A549 (cell line): ENCODE measurements at regions of chr7 and their contacts with region 1.

Region 1: DNA sequence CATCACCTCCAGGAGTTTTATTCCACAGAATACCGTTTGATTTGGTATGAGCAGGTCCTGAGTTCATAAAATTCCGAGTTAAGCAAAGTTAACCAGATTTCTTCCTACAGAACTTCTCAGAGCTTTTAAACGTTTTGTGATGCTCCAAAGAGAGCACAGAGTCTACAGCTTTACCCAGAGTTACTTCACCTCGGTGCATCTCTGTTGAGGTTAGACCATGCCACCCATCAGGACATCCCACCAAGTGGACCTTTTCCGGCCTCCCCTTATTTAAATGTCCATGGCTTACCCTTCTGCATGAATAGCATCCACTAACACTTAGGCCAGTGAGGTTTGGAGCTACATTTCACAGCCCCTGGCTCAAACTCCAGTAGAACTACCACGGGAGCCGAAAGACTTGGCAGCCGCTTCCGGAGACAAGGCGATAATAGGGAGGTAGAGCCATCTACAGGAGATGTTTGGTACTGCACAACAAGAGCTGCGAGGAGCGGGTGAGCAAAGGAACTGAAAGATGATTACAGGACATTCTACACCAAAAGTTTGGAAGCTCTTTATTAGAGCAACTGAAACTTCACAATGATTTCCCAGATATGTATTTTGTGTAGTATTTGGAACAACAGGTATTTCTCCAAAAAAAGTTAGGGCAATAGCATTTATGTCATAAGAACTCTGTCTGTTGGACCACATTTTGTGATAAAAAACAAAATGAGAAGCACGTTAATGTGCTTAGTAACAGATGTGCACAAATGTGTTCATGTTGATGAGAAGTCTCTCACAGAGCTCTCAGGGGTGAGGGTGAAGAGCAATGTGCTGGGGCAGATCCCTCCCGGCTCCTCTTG is 174.7 kb downstream of the HERPUD2 start:
- DNase-seq: peak; percentile 71 to 85
- ATAC-seq: peak; percentile 75 to 95
- H3K4me3 ChIP-seq: no peak overlapping the region
- H3K27ac ChIP-seq: no peak overlapping the region
- H3K4me1 ChIP-seq: no peaks in the 10 kb centered on the region
- CTCF ChIP-seq: peak; percentile 78
- EP300 ChIP-seq: no peak
- POLR2A ChIP-seq: no peak
- RAD21 ChIP-seq: peak; percentile 84 to 90

Region 2: DNA sequence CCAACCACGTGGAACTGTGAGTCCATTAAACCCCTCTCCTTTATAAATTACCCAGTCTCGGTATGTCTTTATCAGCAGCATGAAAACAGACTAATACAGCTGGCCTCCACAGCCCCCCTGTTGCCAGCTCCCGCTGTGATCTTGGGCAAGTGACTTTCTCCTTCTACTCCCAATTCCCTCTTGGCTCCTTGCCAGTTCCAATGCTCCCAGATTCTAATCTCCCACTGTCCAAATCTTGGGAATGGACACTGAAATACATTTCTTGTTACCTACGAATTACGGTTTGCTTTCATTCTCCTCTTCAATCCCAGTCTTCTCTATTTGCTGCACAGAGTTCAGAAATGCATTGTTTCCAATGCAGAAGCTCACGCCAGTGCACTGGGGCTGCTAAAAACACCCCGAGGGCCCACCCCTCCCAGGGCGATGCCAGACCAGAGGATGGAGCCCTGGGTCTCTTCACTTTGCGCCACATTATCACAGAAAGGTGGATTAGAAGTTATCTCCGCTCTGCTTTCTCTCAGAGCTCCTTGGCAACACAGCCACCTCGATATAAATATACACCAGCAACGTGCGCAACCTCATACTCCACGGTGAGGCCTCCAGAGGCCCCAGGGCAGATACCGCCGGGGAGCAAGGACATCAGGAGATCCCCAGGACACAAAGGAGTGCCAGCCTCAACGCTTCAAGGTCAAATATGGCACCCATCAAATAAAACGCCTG is 145.5 kb before region 1 on chr7:
- CTCF ChIA-PET with region 1: interaction called, 11 read pairs
- POLR2A ChIA-PET with region 1: no interaction called
- DNase-seq: no peak
- ATAC-seq: no peak
- H3K4me3 ChIP-seq: no peak overlapping the region
- H3K27ac ChIP-seq: no peak overlapping the region
- H3K4me1 ChIP-seq: no peaks in the 10 kb centered on the region
- CTCF ChIP-seq: no peak
- EP300 ChIP-seq: no peak
- POLR2A ChIP-seq: no peak
- RAD21 ChIP-seq: no peak

Region 3: GRCh38 chr7:35424869-35425495 is 95.2 kb before region 1 on chr7:
- CTCF ChIA-PET with region 1: interaction called, 24 read pairs
- POLR2A ChIA-PET with region 1: no interaction called
- DNase-seq: peak; percentile 51 to 61
- ATAC-seq: peak; percentile 88 to 90; a peak in 5 of 6 replicates
- H3K4me3 ChIP-seq: no peak overlapping the region
- H3K27ac ChIP-seq: no peak overlapping the region
- H3K4me1 ChIP-seq: no peaks in the 10 kb centered on the region
- CTCF ChIP-seq: peak; percentile 79
- EP300 ChIP-seq: no peak
- POLR2A ChIP-seq: no peak
- RAD21 ChIP-seq: peak; percentile 65

Region 4: GRCh38 chr7:35430547-35431153 is 89.5 kb before region 1 on chr7:
- CTCF ChIA-PET with region 1: interaction called, 24 read pairs
- POLR2A ChIA-PET with region 1: no interaction called
- DNase-seq: peak in 1 of 2 experiments; percentile 41
- ATAC-seq: peak in 1 of 2 experiments; percentile 42; a peak in 1 of 6 replicates
- H3K4me3 ChIP-seq: no peak overlapping the region
- H3K27ac ChIP-seq: no peak overlapping the region
- H3K4me1 ChIP-seq: no peaks in the 10 kb centered on the region
- CTCF ChIP-seq: no peak
- EP300 ChIP-seq: no peak
- POLR2A ChIP-seq: no peak
- RAD21 ChIP-seq: peak in 1 of 2 experiments; percentile 42; a peak in 2 of 5 replicates

Region 5: GRCh38 chr7:35508623-35509400 is 11.4 kb before region 1 on chr7:
- CTCF ChIA-PET with region 1: interaction called, 22 read pairs
- POLR2A ChIA-PET with region 1: no interaction called
- DNase-seq: peak in 1 of 2 experiments; percentile 10
- ATAC-seq: peak; percentile 74 to 83; a peak in 5 of 6 replicates
- H3K4me3 ChIP-seq: no peak overlapping the region
- H3K27ac ChIP-seq: no peak overlapping the region
- H3K4me1 ChIP-seq: no peaks in the 10 kb centered on the region
- CTCF ChIP-seq: peak; percentile 6; the same call in 1 of the 3 replicates
- EP300 ChIP-seq: no peak
- POLR2A ChIP-seq: no peak
- RAD21 ChIP-seq: no peak

Region 6: DNA sequence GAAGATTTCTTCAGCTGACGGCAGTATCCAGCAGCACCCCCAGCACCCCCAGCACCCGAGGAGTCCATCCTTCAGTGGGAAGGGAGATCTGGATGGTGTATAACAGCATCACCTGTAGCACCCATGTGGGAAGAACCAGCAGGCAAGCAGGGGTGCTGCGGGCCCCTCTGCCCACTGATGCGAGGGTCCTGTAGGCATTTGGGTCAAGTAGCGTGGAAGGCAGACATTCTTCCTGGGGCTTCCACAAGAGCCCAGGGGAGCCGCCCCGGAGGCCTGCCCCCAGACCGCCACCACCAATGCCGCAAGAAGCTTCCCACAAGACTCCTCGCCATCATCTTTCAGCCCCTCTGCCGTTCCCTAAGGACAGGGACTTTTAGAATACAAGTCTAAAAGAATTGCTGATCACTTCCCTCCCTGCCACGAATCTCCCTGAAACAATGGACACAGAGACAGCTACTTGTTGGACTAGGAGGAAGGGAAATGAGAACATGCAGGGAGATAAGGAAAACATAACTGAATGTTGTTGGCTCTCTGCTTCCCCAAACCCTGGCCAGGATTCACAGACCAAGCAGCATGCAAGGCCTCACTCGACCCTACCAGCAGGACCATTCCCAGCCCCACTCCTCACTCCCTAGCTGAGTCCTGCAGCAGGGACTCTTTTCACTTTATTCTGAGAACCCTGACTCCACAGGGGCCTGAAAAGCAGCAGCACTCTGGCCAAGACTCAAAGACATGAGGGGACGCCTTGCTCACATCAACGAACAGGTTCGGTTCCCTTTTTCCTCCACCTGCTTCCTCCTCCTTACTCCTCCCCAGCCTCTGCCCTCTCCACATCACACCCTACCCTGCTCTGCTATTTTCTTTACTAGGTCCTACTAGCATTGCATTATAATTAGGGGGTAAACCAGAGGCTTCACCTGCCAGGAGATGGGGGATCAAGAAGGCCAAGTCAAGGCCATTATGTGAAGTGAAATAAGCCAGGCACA is 10.2 kb after region 1 on chr7:
- CTCF ChIA-PET with region 1: interaction called, 16 read pairs
- POLR2A ChIA-PET with region 1: no interaction called
- DNase-seq: no peak
- ATAC-seq: no peak
- H3K4me3 ChIP-seq: no peak overlapping the region
- H3K27ac ChIP-seq: no peak overlapping the region
- H3K4me1 ChIP-seq: no peaks in the 10 kb centered on the region
- CTCF ChIP-seq: no peak
- EP300 ChIP-seq: no peak
- POLR2A ChIP-seq: no peak
- RAD21 ChIP-seq: no peak